ENCODE measurements at regions of chr10 and their contacts with region 1.

Region 1: GRCh38 chr10:69639291-69640195 is 9.5 kb downstream of the FAM241B start:
- DNase-seq: peak; percentile 26 to 44
- ATAC-seq: peak; percentile 71 to 78
- H3K4me3 ChIP-seq: no peak overlapping the region
- H3K27ac ChIP-seq: no peak overlapping the region
- H3K4me1 ChIP-seq: no peaks in the 10 kb centered on the region
- H3K27me3 ChIP-seq: no peaks in the 10 kb centered on the region
- CTCF ChIP-seq: peak; percentile 74 to 89 (median 79)
- POLR2A ChIP-seq: no peak

Region 2: GRCh38 chr10:69408318-69409175 is 231.0 kb before region 1 on chr10:
- in situ Hi-C with region 1: no loop called
- intact Hi-C with region 1: loop called (anchors 5 kb)
- DNase-seq: peak; percentile 85 to 92
- ATAC-seq: peak; percentile 73 to 81
- H3K4me3 ChIP-seq: peak overlapping the region; percentile 51 to 67 (median 59)
- H3K27ac ChIP-seq: peak overlapping the region; percentile 87 to 99 (median 90)
- H3K4me1 ChIP-seq: peaks cover 17 to 31% of the 10 kb centered on the region in 2 donors
- H3K27me3 ChIP-seq: no peaks in the 10 kb centered on the region
- CTCF ChIP-seq: peak; percentile 19 to 91 (median 64)
- POLR2A ChIP-seq: peak; percentile 35 to 43

Region 3: DNA sequence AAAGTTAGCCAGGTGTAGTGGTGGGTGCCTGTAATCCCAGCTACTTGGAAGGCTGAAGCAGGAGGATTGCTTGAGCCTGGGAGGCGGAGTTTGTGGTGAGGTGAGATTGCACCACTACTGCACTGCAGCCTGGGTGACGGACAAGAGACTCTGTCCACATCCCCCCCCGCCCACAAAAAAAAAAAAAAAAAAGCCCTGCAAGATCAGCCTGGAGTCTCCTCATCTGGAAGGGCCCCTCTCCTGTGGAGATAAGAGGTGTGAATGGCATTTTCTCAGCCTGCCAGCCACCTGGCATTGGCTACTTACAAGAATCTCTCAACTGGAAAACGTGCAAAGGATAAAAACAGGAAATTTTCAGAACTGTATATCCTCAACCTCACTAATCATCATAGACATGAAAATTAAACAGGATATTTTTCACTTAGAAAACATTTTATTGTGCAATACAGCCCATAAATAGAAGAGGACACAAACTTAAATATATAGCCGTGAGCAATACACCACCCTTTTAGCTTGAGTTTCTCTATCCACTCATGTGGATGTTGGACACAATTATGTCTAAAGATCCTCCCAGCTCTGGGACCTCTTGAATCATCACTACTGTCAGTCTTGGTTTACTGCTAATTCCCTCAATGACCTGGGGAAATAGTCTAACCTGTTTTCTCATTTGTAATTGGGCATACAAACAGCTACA is 199.6 kb before region 1 on chr10:
- in situ Hi-C with region 1: loop called in 3 of 4 experiments (anchors 10 to 25 kb)
- intact Hi-C with region 1: loop called (anchors 5 kb)
- DNase-seq: peak in 1 of 2 donors; percentile 73
- ATAC-seq: peak; percentile 79 to 92
- H3K4me3 ChIP-seq: no peak overlapping the region
- H3K27ac ChIP-seq: peak overlapping the region; percentile 77 to 91 (median 85)
- H3K4me1 ChIP-seq: peaks cover 20 to 29% of the 10 kb centered on the region in 2 donors
- H3K27me3 ChIP-seq: no peaks in the 10 kb centered on the region
- CTCF ChIP-seq: no peak
- POLR2A ChIP-seq: no peak

Region 4: GRCh38 chr10:69515699-69516259 is 123.8 kb before region 1 on chr10:
- in situ Hi-C with region 1: loop called in 3 of 4 experiments (anchors 5 to 10 kb)
- intact Hi-C with region 1: loop called (anchors 2 kb)
- DNase-seq: no peak
- ATAC-seq: peak in 1 of 2 donors; percentile 58
- H3K4me3 ChIP-seq: no peak overlapping the region
- H3K27ac ChIP-seq: no peak overlapping the region
- H3K4me1 ChIP-seq: no peaks in the 10 kb centered on the region
- H3K27me3 ChIP-seq: no peaks in the 10 kb centered on the region
- CTCF ChIP-seq: peak; percentile 9 to 63 (median 48)
- POLR2A ChIP-seq: no peak

Region 5: DNA sequence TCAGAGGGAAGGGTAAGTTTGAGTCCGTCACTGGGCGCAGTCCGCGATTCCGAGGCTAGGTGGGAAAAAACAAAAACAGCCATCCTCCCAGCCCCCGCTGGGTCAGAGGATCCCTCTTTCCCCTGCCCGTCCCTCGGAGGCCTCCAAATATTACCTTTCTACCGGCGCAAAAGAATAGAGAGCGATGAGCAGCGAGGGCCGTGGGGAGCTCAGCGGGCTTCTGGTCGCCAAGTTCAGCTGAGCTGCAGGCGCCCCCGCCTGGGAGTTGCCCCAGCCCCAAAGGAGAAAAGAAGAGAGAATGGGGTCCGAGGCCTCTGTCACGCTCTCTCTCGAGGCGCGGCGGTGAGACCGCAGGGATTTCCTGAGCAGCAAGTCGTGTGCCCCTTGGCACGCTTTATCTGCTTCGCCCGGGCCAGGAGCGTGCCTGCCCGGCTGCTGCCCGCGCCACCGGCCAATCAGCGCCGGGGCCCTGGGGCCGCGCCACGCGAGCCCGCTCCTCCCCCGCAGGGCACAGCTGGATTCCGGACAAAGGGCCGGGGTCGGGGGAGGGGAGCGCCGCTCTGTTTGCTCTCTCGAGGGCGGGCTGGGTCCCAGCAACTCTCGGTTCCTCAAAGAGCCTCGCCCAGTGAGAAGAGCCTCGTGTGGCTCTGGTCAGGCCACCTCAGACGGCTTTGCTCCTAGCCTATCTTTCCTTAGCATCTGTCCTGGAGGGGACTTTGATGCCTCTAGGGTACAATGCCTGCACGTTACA is 66.3 kb before region 1 on chr10 and contains the start of gene NEUROG3:
- in situ Hi-C with region 1: no loop called
- intact Hi-C with region 1: no loop called
- DNase-seq: no peak
- ATAC-seq: no peak
- H3K4me3 ChIP-seq: peak within 1 kb of the TSS in 2 of 4 donors; percentile 22 to 34
- H3K27ac ChIP-seq: no peak within 1 kb of the TSS
- H3K4me1 ChIP-seq: peaks cover 7% of the 10 kb centered on the region in 2 donors
- H3K27me3 ChIP-seq: peaks cover 80 to 97% (median 95%) of the 10 kb centered on the region in 3 donors
- CTCF ChIP-seq: no peak
- POLR2A ChIP-seq: no peak
- total RNA-seq, gene NEUROG3: not detected

Region 6: DNA sequence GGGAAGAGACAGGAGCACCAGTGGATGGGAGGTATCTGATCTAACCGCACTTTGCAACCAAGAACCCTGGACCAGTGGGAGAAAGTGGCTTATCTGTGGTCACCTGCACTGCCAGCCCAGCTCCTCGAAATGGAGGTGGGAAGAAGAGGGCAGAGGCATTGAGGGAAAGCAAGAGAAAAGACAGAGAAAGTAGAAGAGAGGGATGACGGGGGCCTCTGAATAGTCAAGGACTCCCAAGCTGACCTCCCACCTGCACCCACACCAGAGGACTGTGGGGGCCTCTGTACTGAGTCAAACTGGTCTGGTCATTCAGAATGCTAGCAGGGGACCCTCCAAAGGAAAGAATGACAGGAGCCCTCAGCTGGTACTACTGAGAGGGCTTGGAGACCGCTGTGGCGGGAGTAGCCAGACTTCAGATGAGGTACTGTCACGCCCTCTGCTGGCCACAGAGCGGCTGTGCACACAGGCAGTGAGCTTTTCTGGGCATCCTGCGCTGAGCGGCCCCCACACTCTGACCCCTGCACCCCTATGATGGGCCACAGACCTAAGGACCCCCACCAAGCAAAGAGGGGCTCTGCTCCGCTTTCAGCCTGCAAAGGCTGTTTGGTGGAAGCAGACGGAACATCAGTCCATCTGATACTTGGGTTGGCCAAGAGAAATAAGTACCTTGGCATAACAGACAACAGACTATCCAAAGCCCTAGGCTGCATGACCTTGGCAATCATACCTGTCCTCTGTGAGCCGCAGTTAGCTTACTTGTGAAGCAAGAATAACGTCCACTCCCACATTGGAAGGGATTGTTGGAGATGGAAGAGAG is 275.1 kb after region 1 on chr10:
- in situ Hi-C with region 1: loop called in 1 of 4 experiments (anchors 25 kb)
- intact Hi-C with region 1: loop called (anchors 10 kb)
- DNase-seq: peak; percentile 41 to 62
- ATAC-seq: peak; percentile 52 to 73
- H3K4me3 ChIP-seq: no peak overlapping the region
- H3K27ac ChIP-seq: no peak overlapping the region
- H3K4me1 ChIP-seq: peaks cover 19 to 23% of the 10 kb centered on the region in 2 donors
- H3K27me3 ChIP-seq: no peaks in the 10 kb centered on the region
- CTCF ChIP-seq: peak; percentile 90 to 96 (median 95)
- POLR2A ChIP-seq: no peak